ENCODE measurements at regions of chr1 and their contacts with region 1.

Region 1: GRCh38 chr1:157948312-157949073 is 45.0 kb upstream of the KIRREL1 start:
- DNase-seq: peak; percentile 65
- H3K4me3 Mint-ChIP-seq: no peak overlapping the region
- H3K27ac Mint-ChIP-seq: no peak overlapping the region
- H3K4me1 Mint-ChIP-seq: no peaks in the 10 kb centered on the region
- H3K27me3 Mint-ChIP-seq: peaks cover 84% of the 10 kb centered on the region
- CTCF ChIP-seq: peak; percentile 88

Region 2: DNA sequence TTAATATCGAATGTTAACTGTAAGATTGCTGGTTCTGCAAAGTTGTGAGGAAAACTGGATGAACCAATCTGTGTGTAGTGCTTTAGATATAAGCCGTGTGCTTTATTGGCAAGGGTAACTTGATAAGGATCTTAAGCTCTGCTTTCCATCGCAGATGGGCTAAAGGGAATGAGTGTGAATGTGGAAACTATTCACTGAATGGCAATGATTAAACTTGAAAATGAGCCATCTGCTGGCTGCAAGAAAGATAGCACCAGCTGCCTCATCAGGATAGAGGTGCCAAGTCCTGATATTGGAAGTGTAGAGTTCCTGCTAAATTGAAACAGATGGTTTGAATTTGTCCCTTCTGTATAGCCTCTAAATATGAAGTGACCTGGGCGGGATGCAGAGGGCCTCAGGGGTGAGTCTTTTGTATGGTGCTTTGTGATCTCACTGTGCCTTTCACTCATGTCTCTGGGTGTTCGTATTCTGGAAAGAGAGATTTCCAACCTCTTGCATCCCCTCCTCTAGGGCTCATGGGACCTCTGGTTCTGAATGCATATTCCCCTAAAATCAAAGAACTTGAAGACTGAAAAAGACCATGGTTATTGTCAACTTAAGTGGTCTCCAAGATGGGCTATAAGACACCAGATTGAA is 257.1 kb before region 1 on chr1:
- CTCF ChIA-PET with region 1: no interaction called
- POLR2A ChIA-PET with region 1: no interaction called
- intact Hi-C with region 1: loop called (anchors 1 kb)
- DNase-seq: peak; percentile 58
- H3K4me3 Mint-ChIP-seq: no peak overlapping the region
- H3K27ac Mint-ChIP-seq: no peak overlapping the region
- H3K4me1 Mint-ChIP-seq: no peaks in the 10 kb centered on the region
- H3K27me3 Mint-ChIP-seq: peaks cover 48% of the 10 kb centered on the region
- CTCF ChIP-seq: peak; percentile 62

Region 3: GRCh38 chr1:157870490-157870889 is 78.0 kb before region 1 on chr1:
- CTCF ChIA-PET with region 1: interaction called, 77 read pairs
- POLR2A ChIA-PET with region 1: no interaction called
- intact Hi-C with region 1: no loop called
- DNase-seq: no peak
- H3K4me3 Mint-ChIP-seq: no peak overlapping the region
- H3K27ac Mint-ChIP-seq: no peak overlapping the region
- H3K4me1 Mint-ChIP-seq: no peaks in the 10 kb centered on the region
- H3K27me3 Mint-ChIP-seq: peaks cover 78% of the 10 kb centered on the region
- CTCF ChIP-seq: no peak

Region 4: DNA sequence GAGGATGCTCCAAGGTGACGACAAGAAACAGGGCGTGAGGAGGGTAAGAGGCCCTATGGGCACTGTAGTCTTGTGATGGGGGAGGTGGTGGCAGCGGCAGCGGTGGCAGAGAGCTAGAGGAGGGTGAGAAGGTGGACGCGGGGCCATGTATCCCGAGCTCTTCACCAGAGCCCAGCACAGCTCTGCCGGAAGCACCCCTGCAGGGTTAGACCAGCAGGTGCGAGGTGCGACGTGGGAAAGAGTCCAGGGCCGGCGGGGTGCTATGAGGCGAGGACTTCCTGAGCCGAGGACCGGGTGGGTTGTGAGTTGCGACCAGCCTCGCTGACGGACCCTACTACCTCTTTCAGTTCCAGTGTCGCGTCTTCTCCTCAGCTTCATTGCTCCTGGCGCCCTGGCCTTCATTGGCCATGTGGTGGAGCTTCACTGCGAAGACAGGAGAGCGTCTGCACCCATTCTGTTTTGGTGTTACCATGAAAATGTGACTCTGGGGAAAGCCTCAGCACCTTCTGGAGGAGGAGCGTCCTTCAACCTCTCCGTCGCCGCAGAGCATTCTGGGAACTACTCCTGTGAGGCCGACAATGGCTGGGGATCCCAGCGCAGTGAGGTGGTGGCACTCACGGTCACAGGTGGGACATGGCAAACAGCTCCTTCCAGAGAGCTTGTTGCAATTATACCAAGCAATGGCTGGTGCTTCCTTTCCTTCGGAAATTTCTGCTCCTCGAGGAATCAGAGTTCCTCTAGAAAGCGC is 22.9 kb before region 1 on chr1:
- CTCF ChIA-PET with region 1: interaction called, 10 read pairs
- POLR2A ChIA-PET with region 1: no interaction called
- intact Hi-C with region 1: no loop called
- DNase-seq: no peak
- H3K4me3 Mint-ChIP-seq: no peak overlapping the region
- H3K27ac Mint-ChIP-seq: no peak overlapping the region
- H3K4me1 Mint-ChIP-seq: no peaks in the 10 kb centered on the region
- H3K27me3 Mint-ChIP-seq: peaks cover 38% of the 10 kb centered on the region
- CTCF ChIP-seq: no peak

Region 5: DNA sequence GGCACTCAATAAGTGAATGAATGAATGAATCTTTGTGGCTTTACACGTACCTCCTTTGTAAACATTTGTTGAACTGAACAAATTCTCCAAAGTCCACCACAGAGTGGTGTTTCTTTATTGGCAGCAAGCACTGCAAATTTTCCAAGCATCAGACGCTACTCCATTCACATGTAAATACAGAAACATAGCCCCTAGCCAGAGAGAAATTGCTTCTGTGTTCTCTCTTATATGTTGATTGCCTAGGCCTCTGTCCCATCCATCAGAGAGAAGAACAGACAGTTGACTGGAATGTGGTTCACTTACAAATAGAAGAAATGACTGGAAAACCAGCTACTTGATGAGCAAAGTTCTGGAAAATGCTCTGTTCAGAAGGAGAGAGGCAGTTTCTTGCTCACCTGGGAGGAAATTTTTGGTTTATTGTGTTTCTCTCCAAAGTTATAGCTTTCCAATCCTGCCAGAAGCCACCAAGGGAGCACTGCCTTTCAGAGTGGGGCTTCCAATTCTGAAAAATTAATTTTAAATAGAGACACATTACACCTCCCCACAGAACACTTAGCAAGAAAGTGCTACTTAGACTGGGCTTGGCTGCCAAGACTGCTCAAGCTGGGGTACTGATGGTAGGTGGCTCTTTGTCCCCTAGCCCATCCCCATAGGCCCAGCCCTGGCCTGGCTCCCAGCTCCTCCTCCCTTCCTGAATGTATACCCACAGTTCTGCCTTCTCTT is 26.9 kb after region 1 on chr1:
- CTCF ChIA-PET with region 1: no interaction called
- POLR2A ChIA-PET with region 1: no interaction called
- intact Hi-C with region 1: no loop called
- DNase-seq: no peak
- H3K4me3 Mint-ChIP-seq: no peak overlapping the region
- H3K27ac Mint-ChIP-seq: no peak overlapping the region
- H3K4me1 Mint-ChIP-seq: peaks cover 3% of the 10 kb centered on the region
- H3K27me3 Mint-ChIP-seq: no peaks in the 10 kb centered on the region
- CTCF ChIP-seq: no peak

Region 6: GRCh38 chr1:158011714-158012113 is 63.2 kb after region 1 on chr1:
- CTCF ChIA-PET with region 1: no interaction called
- POLR2A ChIA-PET with region 1: no interaction called
- intact Hi-C with region 1: no loop called
- DNase-seq: no peak
- H3K4me3 Mint-ChIP-seq: no peak overlapping the region
- H3K27ac Mint-ChIP-seq: peak overlapping the region; percentile 98
- H3K4me1 Mint-ChIP-seq: peaks cover 82% of the 10 kb centered on the region
- H3K27me3 Mint-ChIP-seq: no peaks in the 10 kb centered on the region
- CTCF ChIP-seq: no peak

Region 7: DNA sequence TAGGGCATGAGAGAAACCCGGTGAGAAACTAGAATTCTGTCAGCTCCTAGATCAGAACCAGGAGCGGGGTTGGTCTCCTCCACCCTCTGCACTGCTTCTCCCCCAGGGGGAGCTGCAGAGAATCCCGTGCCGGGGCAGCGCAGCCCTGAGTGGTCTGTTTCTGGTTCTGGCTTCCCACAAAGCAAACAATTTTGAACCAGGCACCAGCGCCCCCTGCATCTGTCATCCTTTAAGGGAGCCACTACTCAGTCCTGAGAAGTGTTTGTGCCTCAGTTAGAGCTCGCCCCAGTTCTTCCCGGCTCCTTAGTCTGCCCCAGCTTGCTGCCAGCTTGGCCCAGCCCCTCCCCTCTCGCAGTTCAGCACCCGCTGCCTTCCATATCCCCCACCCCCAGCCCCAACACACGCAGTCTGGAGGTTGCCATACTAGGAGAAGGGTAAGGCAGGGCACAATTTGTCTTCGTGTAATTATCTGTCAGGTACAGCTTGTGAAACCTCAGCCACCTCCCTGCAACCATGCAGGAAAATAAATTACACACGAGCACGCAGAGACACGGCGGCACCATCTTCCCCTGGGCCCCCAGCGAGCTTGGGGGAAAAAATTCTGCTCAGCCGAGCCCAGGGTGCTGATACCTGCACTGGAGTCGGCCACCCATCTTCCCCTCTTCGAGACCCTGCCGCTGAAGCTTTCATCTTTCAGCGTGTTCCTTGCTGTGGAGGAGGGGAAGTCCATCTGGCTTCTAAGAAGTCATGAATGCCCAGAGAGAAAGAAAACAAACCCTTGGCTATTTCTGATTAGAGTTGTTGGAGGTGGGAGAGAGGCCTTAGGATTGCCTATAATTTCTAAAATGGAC is 169.6 kb after region 1 on chr1:
- CTCF ChIA-PET with region 1: interaction called, 35 read pairs
- POLR2A ChIA-PET with region 1: no interaction called
- intact Hi-C with region 1: no loop called
- DNase-seq: peak; percentile 65
- H3K4me3 Mint-ChIP-seq: no peak overlapping the region
- H3K27ac Mint-ChIP-seq: no peak overlapping the region
- H3K4me1 Mint-ChIP-seq: peaks cover 11% of the 10 kb centered on the region
- H3K27me3 Mint-ChIP-seq: peaks cover 11% of the 10 kb centered on the region
- CTCF ChIP-seq: peak; percentile 55

Measured in MCF 10A (cell line).